ENCODE measurements at regions of chr4 and their contacts with region 1.

Region 1: GRCh38 chr4:140326395-140326993 is 47.0 kb upstream of the SCOC start:
- DNase-seq: peak; percentile 22
- H3K4me3 ChIP-seq: no peak overlapping the region
- H3K27ac ChIP-seq: no peak overlapping the region
- H3K4me1 ChIP-seq: no peaks in the 10 kb centered on the region
- H3K27me3 ChIP-seq: no peaks in the 10 kb centered on the region
- CTCF ChIP-seq: peak; percentile 74 to 86

Region 2: GRCh38 chr4:139153420-139154133 is 1172.9 kb before region 1 on chr4:
- CTCF ChIA-PET with region 1: no interaction called
- dilution Hi-C with region 1: no loop called
- in situ Hi-C with region 1: no loop called
- intact Hi-C with region 1: no loop called
- DNase-seq: no peak
- H3K4me3 ChIP-seq: no peak overlapping the region
- H3K27ac ChIP-seq: no peak overlapping the region
- H3K4me1 ChIP-seq: no peaks in the 10 kb centered on the region
- H3K27me3 ChIP-seq: no peaks in the 10 kb centered on the region
- CTCF ChIP-seq: no peak

Region 3: GRCh38 chr4:139603576-139604387 is 722.7 kb before region 1 on chr4:
- CTCF ChIA-PET with region 1: interaction called, 4 read pairs
- dilution Hi-C with region 1: no loop called
- in situ Hi-C with region 1: no loop called
- intact Hi-C with region 1: loop called (anchors 2 kb)
- DNase-seq: peak; percentile 55
- H3K4me3 ChIP-seq: no peak overlapping the region
- H3K27ac ChIP-seq: no peak overlapping the region
- H3K4me1 ChIP-seq: no peaks in the 10 kb centered on the region
- H3K27me3 ChIP-seq: no peaks in the 10 kb centered on the region
- CTCF ChIP-seq: peak; percentile 62 to 73

Region 4: DNA sequence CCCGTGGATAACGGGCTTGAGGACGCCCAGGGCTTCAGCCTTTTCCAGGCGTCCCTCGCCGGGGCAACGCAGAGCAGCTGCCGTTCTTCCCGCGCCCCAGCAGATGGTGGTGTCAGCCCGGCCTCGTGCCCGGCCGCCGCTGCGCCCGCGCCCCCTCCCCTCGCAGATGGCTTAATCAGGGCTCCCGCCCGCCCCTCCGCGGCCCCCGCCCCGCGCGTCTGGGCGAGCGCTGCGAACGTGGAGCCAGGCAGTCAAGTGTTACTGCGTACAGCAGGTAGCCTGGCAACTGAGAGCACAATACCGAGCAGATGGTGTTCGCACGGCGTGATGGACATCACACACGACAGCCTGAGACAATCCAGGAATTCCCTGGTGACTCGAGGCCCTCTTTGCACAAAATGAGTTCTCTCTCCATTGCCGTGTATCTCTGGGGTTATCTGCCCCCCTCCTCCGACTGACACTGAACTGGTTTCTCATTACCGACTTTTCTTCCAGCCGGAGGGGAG is 591.6 kb before region 1 on chr4:
- CTCF ChIA-PET with region 1: interaction called, 6 read pairs
- dilution Hi-C with region 1: no loop called
- in situ Hi-C with region 1: no loop called
- intact Hi-C with region 1: loop called (anchors 1 kb)
- DNase-seq: peak; percentile 64
- H3K4me3 ChIP-seq: peak overlapping the region; percentile 35 to 36 (median 35)
- H3K27ac ChIP-seq: no peak overlapping the region
- H3K4me1 ChIP-seq: peaks cover 9% of the 10 kb centered on the region
- H3K27me3 ChIP-seq: peaks cover 12% of the 10 kb centered on the region
- CTCF ChIP-seq: peak; percentile 22 to 67

Region 5: GRCh38 chr4:140052050-140052449 is 274.4 kb before region 1 on chr4:
- CTCF ChIA-PET with region 1: interaction called, 12 read pairs
- dilution Hi-C with region 1: no loop called
- in situ Hi-C with region 1: no loop called
- intact Hi-C with region 1: loop called (anchors 1 kb)
- DNase-seq: peak; percentile 29
- H3K4me3 ChIP-seq: no peak overlapping the region
- H3K27ac ChIP-seq: no peak overlapping the region
- H3K4me1 ChIP-seq: peaks cover 7% of the 10 kb centered on the region
- H3K27me3 ChIP-seq: no peaks in the 10 kb centered on the region
- CTCF ChIP-seq: peak; percentile 49 to 80

Region 6: DNA sequence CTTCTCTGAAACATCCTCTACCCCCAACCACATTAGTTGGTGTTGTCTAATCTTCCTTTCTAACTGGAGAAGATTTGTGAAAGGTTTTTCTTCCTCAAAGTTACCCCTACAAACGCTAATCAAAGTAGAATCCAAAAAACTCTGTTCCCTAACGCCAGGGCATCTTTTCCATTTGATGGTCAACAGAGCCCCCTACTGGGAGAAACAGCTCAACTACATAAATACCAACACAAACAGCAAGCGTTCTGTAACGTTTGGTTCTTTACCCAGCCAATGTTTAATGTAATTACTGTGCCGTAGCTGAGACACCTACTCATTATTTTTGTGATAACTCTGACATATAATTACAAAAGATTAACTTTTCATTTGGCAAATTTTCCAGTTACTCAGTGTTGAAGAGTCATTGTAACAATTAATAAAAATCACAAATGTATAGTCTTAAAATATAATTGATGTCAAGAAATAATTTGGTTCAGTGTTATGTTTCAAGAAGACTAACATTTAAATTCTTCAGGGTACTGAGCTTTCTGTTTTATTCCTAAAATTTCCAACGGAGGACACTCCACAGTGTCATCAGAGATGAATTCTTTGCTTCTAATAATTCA is 524.6 kb after region 1 on chr4:
- CTCF ChIA-PET with region 1: no interaction called
- dilution Hi-C with region 1: no loop called
- in situ Hi-C with region 1: no loop called
- intact Hi-C with region 1: loop called (anchors 1 kb)
- DNase-seq: peak; percentile 45
- H3K4me3 ChIP-seq: no peak overlapping the region
- H3K27ac ChIP-seq: no peak overlapping the region
- H3K4me1 ChIP-seq: peaks cover 8% of the 10 kb centered on the region
- H3K27me3 ChIP-seq: no peaks in the 10 kb centered on the region
- CTCF ChIP-seq: peak; percentile 74 to 84